ENCODE measurements at regions of chr22 and their contacts with region 1.

Region 1: DNA sequence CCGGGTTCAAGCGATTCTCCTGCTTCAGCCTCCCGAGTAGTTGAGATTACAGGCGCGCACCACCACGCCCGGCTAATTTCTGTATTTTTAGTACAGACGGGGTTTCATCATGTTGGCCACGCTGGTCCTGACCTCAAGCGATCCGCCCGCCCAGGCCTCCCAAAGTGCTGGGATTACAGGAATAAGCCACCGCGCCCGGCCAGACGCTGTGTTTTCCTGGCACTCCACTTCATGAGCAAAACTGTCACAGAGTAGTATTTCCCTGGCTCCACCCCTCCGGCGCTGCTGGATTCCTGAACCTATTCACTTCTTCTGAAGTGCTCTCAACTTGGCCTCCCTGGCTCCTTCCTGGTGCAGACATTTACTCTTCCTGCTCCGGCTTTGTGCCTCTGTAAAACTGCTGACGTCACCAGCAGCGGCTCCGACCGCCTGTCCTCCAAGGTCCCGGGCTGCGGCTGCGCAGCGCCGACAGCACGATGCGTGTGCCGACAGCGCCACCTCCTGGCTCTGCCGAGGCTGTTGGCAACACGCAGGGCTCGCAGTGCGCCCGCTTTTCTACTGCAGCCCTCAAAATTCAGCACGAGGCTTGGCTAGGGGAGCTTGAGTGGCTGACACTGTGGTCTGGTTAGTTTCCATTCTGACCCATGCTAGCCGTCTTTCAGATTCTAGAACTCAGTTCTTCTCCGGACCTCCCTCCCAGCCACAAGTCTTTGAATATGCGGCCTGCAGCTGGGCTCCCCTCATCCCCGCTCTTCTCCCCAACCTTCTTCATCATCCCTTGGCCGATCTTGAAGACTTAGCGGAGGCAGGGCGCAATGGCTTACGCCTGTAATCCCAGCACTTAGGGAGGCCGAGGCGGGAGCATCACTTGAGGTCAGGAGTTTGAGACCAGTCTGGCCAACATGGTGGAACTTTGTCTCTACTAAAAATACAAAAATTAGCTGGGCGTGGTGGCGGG is 36.6 kb downstream of the APOL3 start:
- DNase-seq: peak; percentile 85 to 97
- H3K4me3 ChIP-seq: peak overlapping the region in 1 of 2 donors; percentile 50
- H3K27ac ChIP-seq: peak overlapping the region; percentile 84 to 89
- H3K4me1 ChIP-seq: no peaks in the 10 kb centered on the region
- H3K27me3 ChIP-seq: no peaks in the 10 kb centered on the region
- CTCF ChIP-seq: peak; percentile 96 to 98 (median 98)

Region 2: DNA sequence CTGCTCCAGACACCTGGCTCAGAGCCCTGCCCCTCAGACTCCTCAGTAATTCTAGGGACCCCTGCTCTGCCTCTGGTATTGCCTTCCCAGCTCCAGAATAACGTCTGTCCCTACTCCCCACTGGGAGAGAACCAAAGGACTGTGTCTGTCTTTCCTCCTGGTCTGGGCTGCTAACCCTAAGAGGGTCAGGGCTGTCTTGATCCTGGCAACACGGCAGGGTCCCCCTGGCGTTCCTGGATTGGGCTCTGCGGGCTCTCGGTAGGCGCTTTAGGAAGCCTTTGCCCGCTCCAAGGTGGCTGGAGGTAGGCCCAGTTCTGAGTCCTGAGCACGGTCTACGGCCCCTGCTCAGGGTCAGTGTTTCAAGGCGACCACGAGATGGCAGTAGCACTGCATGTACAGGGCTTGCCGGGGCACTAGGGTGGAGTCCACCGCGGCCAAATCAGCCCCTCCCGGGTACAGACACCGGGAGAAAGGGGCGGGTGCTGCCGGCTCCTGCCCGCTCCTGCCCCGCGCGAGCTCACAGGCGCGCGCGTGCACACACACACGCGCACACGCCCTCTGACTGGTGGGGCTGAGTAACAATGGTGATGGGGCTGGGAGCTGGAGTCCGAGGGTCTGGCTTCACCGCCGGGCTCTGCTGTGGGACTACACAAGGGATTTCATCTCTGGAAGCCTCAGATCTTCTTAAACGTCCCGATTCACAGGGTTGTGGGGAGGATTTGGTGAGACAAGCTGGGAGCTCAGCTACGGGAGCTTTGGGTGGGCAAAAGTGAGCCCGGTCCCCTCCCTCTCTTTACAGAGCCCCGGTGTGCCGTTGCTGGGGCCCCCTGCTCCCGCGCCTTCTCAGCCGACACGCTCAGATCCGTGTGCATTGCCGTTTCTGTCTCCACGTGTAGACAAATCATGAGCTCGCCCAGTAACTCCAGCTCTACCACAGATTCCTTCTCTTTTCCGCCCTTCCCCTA is 773.1 kb before region 1 on chr22:
- intact Hi-C with region 1: loop called (anchors 2 kb)
- DNase-seq: peak; percentile 77 to 96
- H3K4me3 ChIP-seq: peak overlapping the region; percentile 53 to 74
- H3K27ac ChIP-seq: peak overlapping the region; percentile 81 to 84
- H3K4me1 ChIP-seq: peaks cover 0 to 25% of the 10 kb centered on the region in 2 donors
- H3K27me3 ChIP-seq: no peaks in the 10 kb centered on the region
- CTCF ChIP-seq: peak; percentile 91 to 97 (median 93)

Region 3: GRCh38 chr22:35627264-35628041 is 496.5 kb before region 1 on chr22:
- intact Hi-C with region 1: loop called (anchors 1 kb)
- DNase-seq: peak; percentile 41 to 88
- H3K4me3 ChIP-seq: peak overlapping the region; percentile 63 to 68
- H3K27ac ChIP-seq: peak overlapping the region; percentile 75 to 90
- H3K4me1 ChIP-seq: peaks cover 0 to 19% of the 10 kb centered on the region in 2 donors
- H3K27me3 ChIP-seq: no peaks in the 10 kb centered on the region
- CTCF ChIP-seq: peak; percentile 55 to 79 (median 64)

Region 4: GRCh38 chr22:35840302-35840739 is 283.6 kb before region 1 on chr22:
- intact Hi-C with region 1: loop called (anchors 5 kb)
- DNase-seq: peak; percentile 58 to 93
- H3K4me3 ChIP-seq: peak overlapping the region; percentile 58 to 60
- H3K27ac ChIP-seq: peak overlapping the region; percentile 72 to 79
- H3K4me1 ChIP-seq: peaks cover 4 to 30% of the 10 kb centered on the region in 2 donors
- H3K27me3 ChIP-seq: no peaks in the 10 kb centered on the region
- CTCF ChIP-seq: no peak

Region 5: GRCh38 chr22:36028646-36029405 is 95.1 kb before region 1 on chr22 and contains the start of gene RBFOX2:
- intact Hi-C with region 1: loop called (anchors 1 kb)
- DNase-seq: peak; percentile 89 to 99
- H3K4me3 ChIP-seq: peak within 1 kb of the TSS; percentile 83 to 96
- H3K27ac ChIP-seq: peak within 1 kb of the TSS; percentile 90 to 95
- H3K4me1 ChIP-seq: peaks cover 0 to 10% of the 10 kb centered on the region in 2 donors
- H3K27me3 ChIP-seq: no peaks in the 10 kb centered on the region
- CTCF ChIP-seq: no peak
- total RNA-seq, gene RBFOX2: 58.1 TPM